Aorta (tissue), 5 donors: ENCODE measurements at regions of chr6 and their contacts with region 1.

Region 1: DNA sequence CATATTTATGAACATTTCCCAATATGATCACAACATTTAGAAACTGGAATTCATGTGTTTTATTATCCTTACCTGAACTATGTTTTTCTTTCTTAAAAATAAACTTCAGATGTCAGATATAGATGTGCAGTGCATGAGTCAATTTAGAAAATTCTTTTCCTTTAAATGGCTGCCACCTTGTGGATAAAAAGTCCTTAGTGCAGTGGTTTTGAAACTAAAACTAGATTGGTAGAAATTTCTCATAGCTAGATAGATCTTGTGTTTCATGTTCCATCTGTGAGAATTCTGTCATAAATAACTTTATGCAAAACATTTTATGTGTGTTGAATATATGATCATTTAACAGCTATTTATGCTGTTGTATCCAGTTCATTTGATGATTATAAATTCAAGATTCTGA is 134.9 kb downstream of the KLHL32 start:
- DNase-seq: no peak
- ATAC-seq: no peak
- H3K4me3 ChIP-seq: no peak overlapping the region
- H3K27ac ChIP-seq: no peak overlapping the region
- H3K4me1 ChIP-seq: no peaks in the 10 kb centered on the region
- H3K27me3 ChIP-seq: no peaks in the 10 kb centered on the region

Region 2: GRCh38 chr6:96626759-96627364 is 432.6 kb before region 1 on chr6:
- intact Hi-C with region 1: loop called (anchors 5 kb)
- DNase-seq: no peak
- ATAC-seq: no peak
- H3K4me3 ChIP-seq: no peak overlapping the region
- H3K27ac ChIP-seq: no peak overlapping the region
- H3K4me1 ChIP-seq: no peaks in the 10 kb centered on the region
- H3K27me3 ChIP-seq: no peaks in the 10 kb centered on the region

Region 3: GRCh38 chr6:96837081-96837971 is 222.1 kb before region 1 on chr6 and contains the start of gene GPR63:
- intact Hi-C with region 1: loop called in 1 of 2 experiments (anchors 5 kb)
- DNase-seq: peak; percentile 70 to 92
- ATAC-seq: peak; percentile 92
- H3K4me3 ChIP-seq: peak within 1 kb of the TSS; percentile 83 to 97
- H3K27ac ChIP-seq: peak within 1 kb of the TSS in 1 of 2 donors; percentile 4
- H3K4me1 ChIP-seq: no peaks in the 10 kb centered on the region
- H3K27me3 ChIP-seq: no peaks in the 10 kb centered on the region
- total RNA-seq, gene GPR63: 1.4 to 3.6 TPM

Region 4: DNA sequence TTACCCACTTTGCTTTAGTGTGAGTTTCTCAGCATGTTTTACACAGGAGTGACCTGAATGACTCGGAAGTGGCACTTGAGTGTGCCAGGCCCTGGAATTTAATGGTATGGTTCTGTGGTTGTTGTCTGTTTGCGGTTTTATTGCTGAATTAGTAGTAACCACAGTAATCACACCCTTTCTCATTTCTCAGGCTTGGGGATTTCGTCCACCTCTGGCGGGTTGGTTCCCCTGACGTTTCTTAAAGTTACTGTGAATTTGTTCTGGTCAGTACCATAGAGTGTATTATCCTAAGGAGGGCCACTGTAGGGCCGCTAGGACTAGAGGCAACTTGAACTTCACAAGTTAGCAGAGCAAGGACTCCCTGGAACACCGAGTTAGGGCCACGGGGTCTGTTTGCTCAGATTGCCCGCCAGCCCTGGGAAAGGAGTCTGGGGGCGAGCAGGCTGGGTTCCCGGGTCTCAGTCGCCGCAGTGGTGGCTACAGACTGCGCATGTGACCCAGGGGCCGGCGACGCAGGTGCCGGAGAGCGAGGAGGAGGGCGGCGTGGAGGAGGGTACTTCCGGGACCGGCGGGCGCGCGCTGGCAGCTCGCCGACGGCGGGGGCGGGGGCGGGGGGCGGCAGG is 135.5 kb before region 1 on chr6:
- intact Hi-C with region 1: loop called (anchors 5 kb)
- DNase-seq: no peak
- ATAC-seq: peak; percentile 24
- H3K4me3 ChIP-seq: peak overlapping the region; percentile 77 to 83
- H3K27ac ChIP-seq: peak overlapping the region in 1 of 2 donors; percentile 60
- H3K4me1 ChIP-seq: no peaks in the 10 kb centered on the region
- H3K27me3 ChIP-seq: no peaks in the 10 kb centered on the region

Region 5: GRCh38 chr6:97009781-97010492 is 49.5 kb before region 1 on chr6:
- intact Hi-C with region 1: no loop called
- DNase-seq: no peak
- ATAC-seq: no peak
- H3K4me3 ChIP-seq: no peak overlapping the region
- H3K27ac ChIP-seq: no peak overlapping the region
- H3K4me1 ChIP-seq: no peaks in the 10 kb centered on the region
- H3K27me3 ChIP-seq: no peaks in the 10 kb centered on the region

Region 6: DNA sequence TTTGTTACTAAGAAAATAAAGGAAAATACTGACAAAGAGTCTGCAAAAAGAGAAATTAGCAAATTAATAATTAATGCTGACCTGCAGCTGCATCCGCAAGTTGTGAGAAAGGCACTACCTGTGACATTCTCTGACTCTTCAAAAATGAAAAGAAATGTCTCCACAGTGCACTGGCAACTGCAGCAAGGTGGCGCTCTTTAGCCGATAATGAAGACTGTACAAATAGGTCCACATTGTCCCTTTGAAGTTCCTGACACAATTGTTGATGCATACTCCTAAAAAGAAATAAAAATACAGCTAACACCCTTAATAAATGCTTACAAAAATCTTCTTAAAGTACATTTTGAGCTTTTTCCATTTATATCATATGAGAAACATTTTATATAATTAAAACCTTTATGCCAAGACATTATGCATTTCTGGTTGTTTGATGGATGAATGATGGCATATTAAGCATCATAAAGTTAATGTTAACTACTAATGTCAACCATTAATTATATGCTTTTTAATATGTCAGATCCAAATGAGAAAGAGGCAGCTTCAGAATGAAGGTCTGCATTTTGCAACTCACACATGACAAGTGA is 127.0 kb after region 1 on chr6:
- intact Hi-C with region 1: no loop called
- DNase-seq: peak; percentile 67 to 77
- ATAC-seq: no peak
- H3K4me3 ChIP-seq: no peak overlapping the region
- H3K27ac ChIP-seq: no peak overlapping the region
- H3K4me1 ChIP-seq: no peaks in the 10 kb centered on the region
- H3K27me3 ChIP-seq: no peaks in the 10 kb centered on the region